GM12878 (cell line): ENCODE measurements at regions of chr2 and their contacts with region 1.

Region 1: DNA sequence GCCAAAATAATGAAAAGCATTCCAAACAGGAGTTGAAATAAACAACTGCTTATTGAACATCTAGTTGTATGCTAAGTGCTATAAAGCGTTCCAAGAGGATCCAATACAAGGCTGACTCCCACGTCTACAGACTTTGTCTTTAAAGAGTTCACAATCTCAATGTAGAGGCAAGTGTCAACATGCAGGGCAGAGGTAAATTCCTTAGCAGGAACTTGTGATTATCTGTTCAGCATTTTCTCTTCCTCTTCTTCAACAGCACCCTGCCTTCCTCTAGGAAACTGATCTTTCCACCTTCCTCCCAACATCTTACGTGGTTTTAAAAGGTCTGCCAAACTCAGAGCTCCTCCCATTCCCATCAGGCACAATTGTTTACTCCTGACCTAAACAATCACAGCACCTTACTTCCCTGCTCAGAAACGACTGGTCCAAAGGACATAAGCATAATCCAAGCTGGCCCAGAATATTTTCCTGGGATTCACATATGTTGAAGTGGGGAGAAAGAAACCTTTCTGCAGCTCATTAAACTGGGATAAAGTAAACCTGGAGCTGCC is 83.9 kb downstream of the ITSN2 start:
- DNase-seq: no peak
- ATAC-seq: no peak
- H3K4me3 ChIP-seq: no peak overlapping the region
- H3K27ac ChIP-seq: peak overlapping the region; percentile 13; the same call in 1 of the 2 replicates
- H3K4me1 ChIP-seq: peaks cover 14% of the 10 kb centered on the region
- H3K27me3 ChIP-seq: no peaks in the 10 kb centered on the region
- CTCF ChIP-seq: no peak
- EP300 ChIP-seq: no peak
- POLR2A ChIP-seq: no peak
- RAD21 ChIP-seq: no peak

Region 2: GRCh38 chr2:23918837-23919489 is 357.5 kb before region 1 on chr2:
- CTCF ChIA-PET with region 1: no interaction called
- POLR2A ChIA-PET with region 1: no interaction called
- RAD21 ChIA-PET with region 1: no interaction called
- SMC1A ChIA-PET with region 1: no interaction called
- in situ Hi-C with region 1: no loop called
- intact Hi-C with region 1: no loop called
- DNase-seq: no peak
- ATAC-seq: peak; percentile 4; the same call in 2 of the 3 replicates
- H3K4me3 ChIP-seq: no peak overlapping the region
- H3K27ac ChIP-seq: no peak overlapping the region
- H3K4me1 ChIP-seq: peaks cover 9% of the 10 kb centered on the region
- H3K27me3 ChIP-seq: no peaks in the 10 kb centered on the region
- CTCF ChIP-seq: no peak
- EP300 ChIP-seq: no peak
- POLR2A ChIP-seq: no peak
- RAD21 ChIP-seq: no peak

Region 3: DNA sequence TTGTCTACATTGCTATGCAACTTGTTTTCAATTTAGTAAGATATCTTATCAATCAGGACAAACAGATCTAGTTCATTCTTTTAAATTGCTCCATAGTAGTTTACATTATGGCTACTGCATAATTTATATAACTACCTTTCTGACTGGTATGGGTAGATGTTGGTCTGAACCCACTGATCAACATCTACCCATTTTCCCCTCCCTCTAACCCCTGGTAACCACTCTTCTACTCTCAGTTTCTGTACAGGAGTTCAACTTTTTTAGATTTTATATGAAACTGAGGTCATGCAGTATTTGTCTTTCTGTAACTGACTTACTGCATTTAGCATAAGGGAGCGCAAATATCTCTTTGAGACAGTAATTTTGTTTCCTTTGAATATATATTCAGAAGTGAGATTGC is 10.7 kb after region 1 on chr2:
- CTCF ChIA-PET with region 1: interaction called, 6 read pairs
- POLR2A ChIA-PET with region 1: no interaction called
- RAD21 ChIA-PET with region 1: interaction called, 3 read pairs
- SMC1A ChIA-PET with region 1: interaction called, 12 read pairs
- in situ Hi-C with region 1: no loop called
- intact Hi-C with region 1: no loop called
- DNase-seq: no peak
- ATAC-seq: peak; percentile 78
- H3K4me3 ChIP-seq: no peak overlapping the region
- H3K27ac ChIP-seq: no peak overlapping the region
- H3K4me1 ChIP-seq: no peaks in the 10 kb centered on the region
- H3K27me3 ChIP-seq: no peaks in the 10 kb centered on the region
- CTCF ChIP-seq: no peak
- EP300 ChIP-seq: no peak
- POLR2A ChIP-seq: no peak
- RAD21 ChIP-seq: no peak

Region 4: GRCh38 chr2:24342110-24342910 is 65.9 kb after region 1 on chr2:
- CTCF ChIA-PET with region 1: interaction called, 10 read pairs
- POLR2A ChIA-PET with region 1: interaction called, 3 read pairs
- RAD21 ChIA-PET with region 1: interaction called, 4 read pairs
- SMC1A ChIA-PET with region 1: interaction called, 16 read pairs
- in situ Hi-C with region 1: no loop called
- intact Hi-C with region 1: no loop called
- DNase-seq: peak; percentile 68
- ATAC-seq: peak; percentile 81
- H3K4me3 ChIP-seq: peak overlapping the region; percentile 9; the same call in 1 of the 2 replicates
- H3K27ac ChIP-seq: peak overlapping the region; percentile 71
- H3K4me1 ChIP-seq: peaks cover 40% of the 10 kb centered on the region
- H3K27me3 ChIP-seq: no peaks in the 10 kb centered on the region
- CTCF ChIP-seq: peak in 2 of 3 experiments; percentile 12 to 40; a peak in 2 of 6 replicates
- EP300 ChIP-seq: peak in 1 of 2 experiments; percentile 22; a peak in 1 of 4 replicates
- POLR2A ChIP-seq: peak; percentile 50; the same call in 1 of the 2 replicates
- RAD21 ChIP-seq: peak; percentile 47; the same call in 1 of the 2 replicates